GM10248 (cell line): ENCODE measurements at regions of chr14 and their contacts with region 1.

Region 1: GRCh38 chr14:76904740-76905438 is 78.7 kb downstream of the LRRC74A start:
- DNase-seq: peak; percentile 75
- CTCF ChIP-seq: no peak

Region 2: GRCh38 chr14:77059276-77059915 is 154.5 kb after region 1 on chr14:
- CTCF ChIA-PET with region 1: interaction called, 399 read pairs
- POLR2A ChIA-PET with region 1: no interaction called
- DNase-seq: no peak
- CTCF ChIP-seq: peak; percentile 13